Naive thymus-derived CD4-positive, alpha-beta T cell (primary cell): ENCODE measurements at regions of chr1 and their contacts with region 1.

Region 1: GRCh38 chr1:231421993-231422764 is at the start of gene EGLN1:
- DNase-seq: peak; percentile 73 to 86 (median 83)
- ATAC-seq: peak; percentile 92
- H3K4me3 ChIP-seq: peak within 1 kb of the TSS; percentile 86
- H3K4me3 Mint-ChIP-seq: peak within 1 kb of the TSS; percentile 89 to 97 (median 92)
- H3K27ac ChIP-seq: peak within 1 kb of the TSS; percentile 80
- H3K27ac Mint-ChIP-seq: peak within 1 kb of the TSS; percentile 82 to 97 (median 91)
- H3K4me1 ChIP-seq: peaks cover 28 to 34% of the 10 kb centered on the region in 2 donors
- H3K4me1 Mint-ChIP-seq: peaks cover 36 to 56% (median 46%) of the 10 kb centered on the region in 7 donors
- H3K27me3 ChIP-seq: no peaks in the 10 kb centered on the region
- H3K27me3 Mint-ChIP-seq: peaks cover 0 to 32% (median 0%) of the 10 kb centered on the region in 5 donors
- total RNA-seq, gene EGLN1: 13.6 to 38.9 (median 23.0) TPM

Region 2: DNA sequence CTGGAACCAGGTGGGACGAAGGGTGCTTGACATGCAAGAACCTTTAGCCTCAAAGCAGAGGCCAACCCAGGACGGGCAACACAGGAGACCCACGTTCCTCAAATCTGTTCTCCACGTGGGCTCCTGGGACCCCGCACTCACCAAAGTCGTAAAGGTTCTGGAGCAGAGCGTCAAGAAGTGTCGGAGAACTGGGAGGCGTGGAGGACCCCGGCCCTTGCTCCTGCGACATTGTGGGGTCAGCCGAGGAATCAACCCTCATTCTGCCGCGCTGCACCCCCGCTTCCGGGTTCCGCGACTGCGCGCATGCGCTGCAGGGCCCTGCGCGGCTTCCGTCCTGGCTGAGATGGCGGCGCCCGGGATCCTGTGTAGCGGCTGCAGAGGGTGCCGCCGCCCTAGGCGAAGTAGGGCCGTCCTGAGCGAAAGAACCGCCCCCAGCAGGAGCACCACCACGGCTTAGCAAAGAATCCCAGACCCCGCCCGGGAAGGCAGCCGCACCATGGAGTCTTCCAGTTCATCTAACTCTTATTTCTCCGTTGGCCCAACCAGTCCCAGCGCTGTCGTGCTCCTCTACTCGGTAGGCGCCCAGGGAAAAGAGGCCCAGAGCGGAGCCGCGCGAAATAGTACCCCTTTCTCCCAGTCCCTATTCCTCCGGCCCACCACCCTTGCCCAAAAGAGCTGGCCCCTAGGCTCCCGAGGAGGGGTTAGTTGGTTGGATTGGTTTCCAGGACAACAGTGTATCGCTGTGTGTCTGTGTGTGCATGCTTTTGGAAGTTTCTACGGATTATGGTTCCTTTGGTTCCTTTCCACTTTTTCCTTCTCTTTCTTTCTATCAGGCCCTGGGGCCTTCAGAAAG is 181.1 kb before region 1 on chr1 and contains the start of gene GNPAT:
- CTCF ChIA-PET with region 1: no interaction called
- POLR2A ChIA-PET with region 1: interaction called, 4 read pairs
- intact Hi-C with region 1: loop called (anchors 1 to 5 kb)
- DNase-seq: peak; percentile 86 to 97 (median 92)
- ATAC-seq: peak; percentile 98
- H3K4me3 ChIP-seq: peak within 1 kb of the TSS; percentile 98
- H3K4me3 Mint-ChIP-seq: peak within 1 kb of the TSS; percentile 90 to 99 (median 95)
- H3K27ac ChIP-seq: peak within 1 kb of the TSS; percentile 93
- H3K27ac Mint-ChIP-seq: peak within 1 kb of the TSS; percentile 92 to 99 (median 97)
- H3K4me1 ChIP-seq: peaks cover 17 to 44% of the 10 kb centered on the region in 2 donors
- H3K4me1 Mint-ChIP-seq: peaks cover 47 to 86% (median 76%) of the 10 kb centered on the region in 7 donors
- H3K27me3 ChIP-seq: no peaks in the 10 kb centered on the region
- H3K27me3 Mint-ChIP-seq: no peaks in the 10 kb centered on the region
- total RNA-seq, gene GNPAT: 17.3 to 41.0 (median 35.5) TPM

Region 3: DNA sequence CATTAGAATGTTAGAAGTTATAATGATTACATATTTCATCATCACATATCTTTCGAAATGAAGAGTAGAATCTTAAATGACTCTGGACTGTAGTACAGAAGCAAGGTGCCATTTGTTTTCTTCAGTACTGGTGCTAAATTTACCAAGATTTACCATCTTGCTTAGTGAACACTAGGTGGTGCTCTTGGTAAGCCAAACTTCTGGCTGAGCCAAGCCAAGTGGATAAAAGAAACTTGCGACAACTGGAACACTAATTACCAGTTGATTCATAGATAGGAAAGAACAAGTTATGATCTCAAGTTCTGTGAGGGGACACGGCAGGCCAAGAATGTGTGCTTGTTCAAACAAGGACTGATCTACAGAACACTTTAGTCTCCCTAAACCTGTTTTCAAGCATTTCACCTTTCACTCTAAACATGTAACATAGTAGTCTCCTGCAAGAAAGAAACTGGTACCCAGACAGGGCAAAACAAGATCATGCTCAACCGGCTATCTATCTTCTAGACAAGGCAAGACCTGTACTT is 64.3 kb before region 1 on chr1:
- CTCF ChIA-PET with region 1: interaction called, 3 read pairs
- POLR2A ChIA-PET with region 1: no interaction called
- intact Hi-C with region 1: loop called (anchors 1 to 5 kb)
- DNase-seq: peak in 7 of 9 donors; percentile 36 to 64 (median 55)
- ATAC-seq: peak; percentile 91
- H3K4me3 ChIP-seq: no peak overlapping the region
- H3K4me3 Mint-ChIP-seq: no peak overlapping the region
- H3K27ac ChIP-seq: no peak overlapping the region
- H3K27ac Mint-ChIP-seq: peak overlapping the region in 7 of 9 donors; percentile 3 to 63 (median 27)
- H3K4me1 ChIP-seq: peaks cover 0 to 3% of the 10 kb centered on the region in 2 donors
- H3K4me1 Mint-ChIP-seq: peaks cover 2 to 15% (median 7%) of the 10 kb centered on the region in 7 donors
- H3K27me3 ChIP-seq: no peaks in the 10 kb centered on the region
- H3K27me3 Mint-ChIP-seq: no peaks in the 10 kb centered on the region

Region 4: GRCh38 chr1:231410036-231410612 is 12.1 kb before region 1 on chr1:
- CTCF ChIA-PET with region 1: interaction called, 5 read pairs
- POLR2A ChIA-PET with region 1: interaction called, 4 read pairs
- intact Hi-C with region 1: loop called in 1 of 2 experiments (anchors 1 kb)
- DNase-seq: no peak
- ATAC-seq: no peak
- H3K4me3 ChIP-seq: no peak overlapping the region
- H3K4me3 Mint-ChIP-seq: no peak overlapping the region
- H3K27ac ChIP-seq: no peak overlapping the region
- H3K27ac Mint-ChIP-seq: no peak overlapping the region
- H3K4me1 ChIP-seq: peaks cover 18 to 32% of the 10 kb centered on the region in 2 donors
- H3K4me1 Mint-ChIP-seq: peaks cover 29 to 45% (median 39%) of the 10 kb centered on the region in 7 donors
- H3K27me3 ChIP-seq: no peaks in the 10 kb centered on the region
- H3K27me3 Mint-ChIP-seq: no peaks in the 10 kb centered on the region

Region 5: GRCh38 chr1:231442735-231443134 is 20.6 kb after region 1 on chr1:
- CTCF ChIA-PET with region 1: no interaction called
- POLR2A ChIA-PET with region 1: no interaction called
- intact Hi-C with region 1: no loop called
- DNase-seq: no peak
- ATAC-seq: no peak
- H3K4me3 ChIP-seq: no peak overlapping the region
- H3K4me3 Mint-ChIP-seq: no peak overlapping the region
- H3K27ac ChIP-seq: no peak overlapping the region
- H3K27ac Mint-ChIP-seq: no peak overlapping the region
- H3K4me1 ChIP-seq: no peaks in the 10 kb centered on the region
- H3K4me1 Mint-ChIP-seq: no peaks in the 10 kb centered on the region
- H3K27me3 ChIP-seq: no peaks in the 10 kb centered on the region
- H3K27me3 Mint-ChIP-seq: peaks cover 35 to 64% (median 57%) of the 10 kb centered on the region in 5 donors

Region 6: DNA sequence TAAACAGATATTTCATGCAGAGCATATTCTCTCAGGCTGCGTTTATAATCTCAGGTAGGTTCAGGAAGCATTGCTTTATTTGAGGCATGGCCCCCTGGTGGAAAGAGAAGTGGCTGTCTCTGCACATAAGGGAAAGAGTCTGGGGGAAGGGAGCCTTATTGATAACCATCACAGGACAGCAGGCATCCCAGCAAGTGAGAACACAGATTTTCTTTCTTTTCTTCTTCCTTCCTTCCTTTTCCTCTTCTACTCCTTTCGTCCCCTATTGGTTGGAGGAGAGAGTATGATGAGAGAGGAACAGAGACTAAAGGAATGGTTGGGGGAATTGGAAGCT is 128.2 kb after region 1 on chr1:
- CTCF ChIA-PET with region 1: no interaction called
- POLR2A ChIA-PET with region 1: no interaction called
- intact Hi-C with region 1: loop called (anchors 1 kb)
- DNase-seq: peak in 6 of 9 donors; percentile 12 to 38 (median 22)
- ATAC-seq: peak; percentile 59
- H3K4me3 ChIP-seq: no peak overlapping the region
- H3K4me3 Mint-ChIP-seq: no peak overlapping the region
- H3K27ac ChIP-seq: no peak overlapping the region
- H3K27ac Mint-ChIP-seq: peak overlapping the region in 2 of 9 donors; percentile 13 to 51
- H3K4me1 ChIP-seq: no peaks in the 10 kb centered on the region
- H3K4me1 Mint-ChIP-seq: peaks cover 13 to 50% (median 33%) of the 10 kb centered on the region in 7 donors
- H3K27me3 ChIP-seq: no peaks in the 10 kb centered on the region
- H3K27me3 Mint-ChIP-seq: no peaks in the 10 kb centered on the region

Region 7: DNA sequence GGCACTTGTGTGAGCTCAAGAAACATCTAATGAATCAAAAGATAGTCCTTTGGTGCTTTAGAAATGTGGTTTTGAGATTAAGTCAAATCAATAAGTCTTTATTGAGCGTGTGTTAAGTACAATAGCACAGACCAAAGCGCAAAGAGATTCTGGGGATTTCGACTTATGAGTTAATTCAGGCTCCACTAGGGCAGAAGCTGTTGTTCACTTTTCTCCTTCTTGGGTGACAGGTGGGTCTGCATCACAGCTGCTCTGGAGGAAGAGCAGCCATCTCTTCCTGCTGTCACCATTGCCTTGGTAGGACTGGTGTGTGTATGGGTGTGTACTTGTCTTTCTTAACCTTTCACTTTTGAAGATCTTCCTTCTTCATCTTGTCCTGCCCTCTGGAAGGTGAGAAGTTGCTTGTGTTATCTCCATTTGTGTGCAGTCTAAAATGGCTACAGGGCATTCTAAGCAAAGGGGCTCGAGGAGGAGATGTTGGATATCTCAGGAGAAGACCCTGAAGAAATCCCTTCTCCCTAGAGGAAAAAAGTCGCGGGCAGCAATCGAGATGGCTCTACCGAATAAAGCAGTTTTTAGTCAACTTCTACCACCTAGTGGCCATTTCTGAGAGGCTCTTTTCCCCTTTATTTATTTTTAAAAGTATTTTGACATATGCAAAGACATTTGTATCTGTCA is 181.6 kb after region 1 on chr1:
- CTCF ChIA-PET with region 1: no interaction called
- POLR2A ChIA-PET with region 1: interaction called, 3 read pairs
- intact Hi-C with region 1: loop called in 1 of 2 experiments (anchors 1 kb)
- DNase-seq: peak; percentile 13 to 72 (median 67)
- ATAC-seq: peak; percentile 87
- H3K4me3 ChIP-seq: peak overlapping the region; percentile 67
- H3K4me3 Mint-ChIP-seq: peak overlapping the region; percentile 77 to 98 (median 94)
- H3K27ac ChIP-seq: peak overlapping the region; percentile 70
- H3K27ac Mint-ChIP-seq: peak overlapping the region; percentile 79 to 96 (median 87)
- H3K4me1 ChIP-seq: no peaks in the 10 kb centered on the region
- H3K4me1 Mint-ChIP-seq: peaks cover 8 to 19% (median 11%) of the 10 kb centered on the region in 7 donors
- H3K27me3 ChIP-seq: no peaks in the 10 kb centered on the region
- H3K27me3 Mint-ChIP-seq: peaks cover 0 to 18% (median 0%) of the 10 kb centered on the region in 5 donors